ENCODE measurements at regions of chr15 and their contacts with region 1.

Region 1: DNA sequence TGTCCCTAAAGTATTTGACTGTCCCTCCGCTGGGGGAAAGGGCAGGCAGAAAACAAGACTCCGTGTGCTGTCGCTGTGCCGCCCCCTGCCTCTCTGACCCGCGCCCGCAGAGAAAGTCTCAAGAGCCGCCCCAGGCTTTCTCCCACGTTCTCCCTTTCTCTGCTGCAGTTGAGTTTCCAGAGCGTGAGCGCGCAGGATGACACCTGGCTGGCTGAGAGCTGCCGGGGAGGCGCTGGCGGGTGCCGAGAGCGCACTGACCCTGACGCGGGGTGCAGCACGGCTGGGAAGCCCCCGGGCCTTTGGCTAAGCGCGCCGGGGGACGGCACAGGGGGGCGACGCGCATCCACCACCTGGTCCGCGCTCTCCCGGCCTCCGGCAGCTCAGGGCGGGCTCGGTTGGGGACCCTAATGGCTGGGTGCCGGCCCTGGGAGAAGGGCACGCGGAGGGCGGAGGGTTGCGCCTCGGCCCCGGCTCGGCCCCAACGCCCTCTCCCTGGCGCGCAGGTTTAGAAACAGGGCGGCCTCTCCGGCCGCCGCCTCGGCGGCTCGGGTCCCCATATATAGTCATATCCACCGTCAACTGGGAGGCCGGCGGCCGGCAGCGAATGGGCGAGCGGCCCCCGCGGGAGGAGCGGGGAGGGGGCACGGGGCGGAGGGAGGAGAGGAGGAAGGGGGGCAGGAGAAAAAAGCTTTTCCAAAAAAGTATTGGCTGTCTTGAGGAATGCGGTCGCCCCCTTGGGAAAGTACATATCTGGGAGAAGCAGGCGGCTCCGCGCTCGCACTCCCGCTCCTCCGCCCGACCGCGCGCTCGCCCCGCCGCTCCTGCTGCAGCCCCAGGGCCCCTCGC is at the start of gene TPM1:
- DNase-seq: peak; percentile 94 to 96
- ATAC-seq: peak; percentile 91
- H3K4me3 ChIP-seq: peak within 1 kb of the TSS; percentile 95 to 98
- H3K27ac ChIP-seq: peak within 1 kb of the TSS; percentile 79 to 80
- H3K4me1 ChIP-seq: no peaks in the 10 kb centered on the region
- H3K27me3 ChIP-seq: no peaks in the 10 kb centered on the region
- total RNA-seq, gene TPM1: 861 to 1,497 TPM

Region 2: GRCh38 chr15:62782039-62782791 is 260.0 kb before region 1 on chr15:
- intact Hi-C with region 1: loop called (anchors 5 kb)
- DNase-seq: peak; percentile 82 to 87
- ATAC-seq: peak; percentile 89
- H3K4me3 ChIP-seq: no peak overlapping the region
- H3K27ac ChIP-seq: peak overlapping the region in 1 of 2 donors; percentile 84
- H3K4me1 ChIP-seq: no peaks in the 10 kb centered on the region
- H3K27me3 ChIP-seq: no peaks in the 10 kb centered on the region

Region 3: DNA sequence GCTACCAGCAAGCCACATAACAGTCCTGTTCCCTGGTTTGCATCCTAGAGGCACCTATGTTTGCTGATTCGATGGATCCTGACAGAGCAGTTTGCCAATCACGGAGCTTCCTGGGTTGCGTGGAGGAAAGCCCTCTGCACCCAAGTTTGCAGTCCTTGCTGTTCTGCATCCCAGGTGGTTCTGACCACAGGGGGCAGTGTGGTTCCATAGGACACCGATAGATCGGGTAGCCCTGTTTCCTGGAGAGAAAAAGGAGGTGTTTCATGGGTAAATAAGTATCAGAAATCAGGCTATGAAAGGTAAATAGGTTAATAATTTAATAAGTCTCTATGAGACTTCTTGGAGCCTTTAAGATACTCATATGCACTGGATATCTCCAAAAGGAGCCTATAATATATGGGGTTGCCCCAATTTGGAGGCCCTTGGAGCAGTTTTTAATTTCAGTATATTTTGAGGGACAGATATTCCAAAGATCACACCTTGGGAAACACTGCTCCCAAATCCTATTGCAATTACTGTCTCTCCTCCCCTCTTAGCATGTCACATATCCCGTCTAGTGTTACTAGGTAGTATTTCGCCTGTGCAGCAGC is 194.2 kb before region 1 on chr15:
- intact Hi-C with region 1: loop called (anchors 5 kb)
- DNase-seq: peak; percentile 81 to 89
- ATAC-seq: peak; percentile 69
- H3K4me3 ChIP-seq: no peak overlapping the region
- H3K27ac ChIP-seq: no peak overlapping the region
- H3K4me1 ChIP-seq: no peaks in the 10 kb centered on the region
- H3K27me3 ChIP-seq: no peaks in the 10 kb centered on the region

Region 4: DNA sequence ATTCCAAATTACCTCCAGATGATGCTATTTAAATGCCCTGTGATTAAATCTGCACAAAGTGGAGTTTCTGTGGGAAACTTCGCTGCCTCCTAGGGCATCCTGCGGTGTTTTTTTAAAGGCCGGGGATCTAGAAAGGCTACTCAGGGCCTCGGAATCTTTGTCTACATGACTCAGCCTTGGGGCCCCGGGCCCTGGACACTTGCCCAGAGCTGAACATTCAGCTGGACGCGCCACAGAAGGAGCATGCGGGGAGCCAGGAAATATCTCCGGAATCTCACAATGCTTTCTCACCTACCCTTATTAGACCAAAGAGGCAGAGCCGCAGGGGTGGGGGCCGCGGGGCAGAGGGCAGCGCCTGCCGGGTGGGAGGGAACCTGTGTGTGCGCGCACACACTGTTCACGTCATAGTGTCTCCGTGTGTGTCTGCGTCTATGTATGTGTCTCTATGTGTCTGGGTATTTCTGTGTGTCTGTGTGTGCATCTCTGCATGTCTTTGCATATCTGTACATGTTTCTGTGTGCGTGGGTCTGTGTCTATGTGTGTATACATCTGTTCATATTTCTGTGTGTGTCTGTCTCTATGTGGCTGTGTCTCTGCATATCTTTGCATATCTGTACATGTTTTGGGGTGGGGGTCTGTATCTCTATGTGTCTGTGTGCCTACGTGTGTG is 145.1 kb before region 1 on chr15:
- intact Hi-C with region 1: loop called in 1 of 2 experiments (anchors 5 kb)
- DNase-seq: peak; percentile 93 to 96
- ATAC-seq: peak; percentile 93
- H3K4me3 ChIP-seq: no peak overlapping the region
- H3K27ac ChIP-seq: peak overlapping the region; percentile 23 to 24
- H3K4me1 ChIP-seq: peaks cover 2 to 3% of the 10 kb centered on the region in 2 donors
- H3K27me3 ChIP-seq: no peaks in the 10 kb centered on the region

Region 5: GRCh38 chr15:62928242-62928995 is 113.8 kb before region 1 on chr15:
- intact Hi-C with region 1: loop called in 1 of 2 experiments (anchors 2 kb)
- DNase-seq: peak in 1 of 2 donors; percentile 70
- ATAC-seq: peak; percentile 84
- H3K4me3 ChIP-seq: no peak overlapping the region
- H3K27ac ChIP-seq: peak overlapping the region in 1 of 2 donors; percentile 96
- H3K4me1 ChIP-seq: peaks cover 4 to 10% of the 10 kb centered on the region in 2 donors
- H3K27me3 ChIP-seq: no peaks in the 10 kb centered on the region

Region 6: DNA sequence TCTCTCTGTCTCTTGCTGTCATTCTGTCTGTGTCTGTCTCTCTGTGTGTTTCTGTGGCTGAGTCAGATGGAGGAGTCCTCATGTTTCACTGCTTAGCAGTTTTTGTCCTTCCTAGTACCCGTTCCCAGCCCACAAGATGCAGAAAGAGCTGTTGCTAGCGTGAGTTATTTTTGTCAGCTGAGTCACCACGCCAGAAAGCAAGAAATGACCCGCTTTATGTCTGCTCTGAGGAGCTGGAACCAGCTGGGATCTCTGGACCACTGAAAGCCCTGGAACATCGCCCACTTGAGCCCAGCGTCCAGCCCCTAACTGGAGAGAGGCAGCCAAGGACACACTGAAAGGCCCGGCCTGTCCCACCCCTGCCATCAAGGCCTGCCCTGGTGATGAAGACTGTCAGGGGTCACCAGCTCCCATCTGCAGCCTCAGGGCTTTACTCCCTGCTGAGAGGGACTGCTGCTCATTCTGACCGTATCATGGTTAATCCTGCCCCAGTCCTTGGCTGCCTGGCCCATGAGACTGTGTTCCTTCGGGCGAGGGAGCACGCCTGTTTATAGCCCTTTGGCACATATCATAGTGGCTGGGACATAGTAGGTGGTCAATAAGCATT is 101.3 kb before region 1 on chr15:
- intact Hi-C with region 1: loop called in 1 of 2 experiments (anchors 5 kb)
- DNase-seq: peak; percentile 90 to 91
- ATAC-seq: peak; percentile 92
- H3K4me3 ChIP-seq: no peak overlapping the region
- H3K27ac ChIP-seq: peak overlapping the region; percentile 61 to 95
- H3K4me1 ChIP-seq: peaks cover 0 to 5% of the 10 kb centered on the region in 2 donors
- H3K27me3 ChIP-seq: no peaks in the 10 kb centered on the region

Region 7: GRCh38 chr15:63023351-63023945 is 18.7 kb before region 1 on chr15:
- intact Hi-C with region 1: loop called in 1 of 2 experiments (anchors 2 kb)
- DNase-seq: peak in 1 of 2 donors; percentile 68
- ATAC-seq: peak; percentile 63
- H3K4me3 ChIP-seq: no peak overlapping the region
- H3K27ac ChIP-seq: peak overlapping the region; percentile 71 to 91
- H3K4me1 ChIP-seq: no peaks in the 10 kb centered on the region
- H3K27me3 ChIP-seq: no peaks in the 10 kb centered on the region